Naive thymus-derived CD4-positive, alpha-beta T cell (primary cell): ENCODE measurements at regions of chr6 and their contacts with region 1.

Region 1: GRCh38 chr6:31834434-31835198 is 7.1 kb downstream of the HSPA1B start:
- DNase-seq: peak; percentile 77 to 84 (median 82)
- ATAC-seq: peak; percentile 82
- H3K4me3 ChIP-seq: peak overlapping the region; percentile 73
- H3K4me3 Mint-ChIP-seq: peak overlapping the region; percentile 84 to 99 (median 99)
- H3K27ac ChIP-seq: peak overlapping the region; percentile 92
- H3K27ac Mint-ChIP-seq: peak overlapping the region; percentile 91 to 100 (median 99)
- H3K4me1 ChIP-seq: peaks cover 40 to 48% of the 10 kb centered on the region in 2 donors
- H3K4me1 Mint-ChIP-seq: peaks cover 31 to 64% (median 53%) of the 10 kb centered on the region in 7 donors
- H3K27me3 ChIP-seq: no peaks in the 10 kb centered on the region
- H3K27me3 Mint-ChIP-seq: no peaks in the 10 kb centered on the region

Region 2: DNA sequence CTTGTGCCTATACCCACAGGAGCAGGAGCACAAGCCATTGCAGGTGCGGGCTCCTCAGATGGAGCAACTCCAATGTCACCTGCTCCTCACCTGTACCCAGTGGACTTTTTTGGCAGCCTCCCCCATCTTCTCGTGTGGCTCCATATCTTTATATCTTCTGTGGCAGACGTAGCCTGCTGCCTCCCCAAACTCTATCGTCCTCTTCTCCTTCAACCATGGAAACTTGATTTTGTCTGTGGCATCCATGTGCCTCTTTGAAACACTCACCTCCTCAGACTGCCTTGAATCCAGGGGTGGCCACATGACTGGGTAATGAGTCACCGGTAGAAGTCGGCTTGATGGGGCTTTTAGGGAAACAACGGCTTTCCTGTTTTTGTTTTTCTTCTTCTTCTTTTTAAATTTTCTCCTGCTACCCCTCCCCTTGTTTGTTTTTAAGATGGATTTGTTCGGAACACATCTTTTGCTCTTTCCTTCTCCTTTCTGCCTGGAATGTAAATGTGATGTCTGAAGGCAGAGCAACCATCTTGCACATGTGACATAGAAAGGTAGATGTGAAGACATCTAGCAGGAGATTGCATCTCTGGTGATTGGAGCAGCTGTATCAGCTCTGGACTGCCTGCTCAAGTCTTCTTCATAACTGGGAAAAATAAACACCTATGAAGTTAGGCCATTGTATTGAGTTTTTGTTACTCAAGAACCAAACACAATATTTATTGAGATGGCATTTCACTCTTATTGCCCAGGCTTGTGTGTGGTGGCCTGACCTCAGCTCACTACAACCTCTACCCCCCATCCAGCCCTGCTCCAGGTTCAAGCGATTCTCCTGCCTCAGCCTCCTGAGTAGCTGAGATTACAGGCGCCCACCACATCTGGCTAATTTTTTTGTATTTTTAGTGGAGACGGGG is 1020.2 kb before region 1 on chr6:
- CTCF ChIA-PET with region 1: no interaction called
- POLR2A ChIA-PET with region 1: no interaction called
- intact Hi-C with region 1: no loop called
- DNase-seq: peak in 2 of 9 donors; percentile 38 to 63
- ATAC-seq: peak; percentile 80
- H3K4me3 ChIP-seq: no peak overlapping the region
- H3K4me3 Mint-ChIP-seq: peak overlapping the region in 9 of 10 donors; percentile 12 to 70 (median 39)
- H3K27ac ChIP-seq: no peak overlapping the region
- H3K27ac Mint-ChIP-seq: peak overlapping the region; percentile 49 to 95 (median 83)
- H3K4me1 ChIP-seq: peaks cover 18 to 40% of the 10 kb centered on the region in 2 donors
- H3K4me1 Mint-ChIP-seq: peaks cover 39 to 85% (median 78%) of the 10 kb centered on the region in 7 donors
- H3K27me3 ChIP-seq: no peaks in the 10 kb centered on the region
- H3K27me3 Mint-ChIP-seq: no peaks in the 10 kb centered on the region

Region 3: DNA sequence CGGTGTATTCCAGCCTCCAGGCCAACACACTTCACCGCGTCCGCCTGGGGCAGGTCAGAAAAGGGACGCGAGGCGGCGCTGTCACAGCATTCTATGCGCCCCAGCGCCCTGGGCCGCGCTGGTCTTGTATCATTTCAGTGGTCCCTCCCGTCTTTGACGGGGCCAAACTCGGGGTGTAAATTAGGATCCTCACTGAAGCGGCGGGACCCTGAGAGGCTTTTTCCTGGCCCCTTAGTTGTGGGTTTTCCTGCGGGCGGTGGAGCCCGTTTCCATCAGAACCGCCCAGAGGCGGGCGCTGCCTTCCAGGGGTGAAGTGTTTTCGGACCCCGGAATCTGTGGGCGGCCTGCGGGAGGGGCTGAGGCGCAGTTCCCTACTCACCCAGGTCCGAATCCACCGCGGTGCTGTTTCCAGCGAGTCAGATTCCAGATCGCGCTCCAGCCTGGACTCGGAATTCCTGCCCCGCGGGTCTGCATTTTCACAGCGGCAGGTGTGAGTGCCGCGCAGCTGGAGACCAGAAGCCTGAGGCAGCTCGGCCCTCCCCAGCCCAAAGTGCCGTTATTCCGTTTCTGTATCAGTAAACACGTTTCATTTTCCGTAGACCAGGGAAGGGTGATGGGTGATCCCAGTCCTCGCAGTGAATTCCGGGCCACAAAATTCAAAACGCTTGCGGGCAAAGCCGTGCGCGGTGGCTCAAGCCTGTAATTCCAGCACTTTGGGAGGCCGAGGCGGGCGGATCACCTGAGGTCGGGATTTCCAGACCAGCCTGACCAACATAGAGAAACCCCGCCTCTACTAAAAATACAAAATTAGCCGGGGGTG is 340.5 kb before region 1 on chr6:
- CTCF ChIA-PET with region 1: no interaction called
- POLR2A ChIA-PET with region 1: no interaction called
- intact Hi-C with region 1: loop called (anchors 5 to 10 kb)
- DNase-seq: peak; percentile 33 to 78 (median 62)
- ATAC-seq: peak; percentile 65
- H3K4me3 ChIP-seq: peak overlapping the region; percentile 87
- H3K4me3 Mint-ChIP-seq: peak overlapping the region; percentile 78 to 93 (median 88)
- H3K27ac ChIP-seq: peak overlapping the region; percentile 81
- H3K27ac Mint-ChIP-seq: peak overlapping the region; percentile 36 to 98 (median 87)
- H3K4me1 ChIP-seq: peaks cover 17 to 24% of the 10 kb centered on the region in 2 donors
- H3K4me1 Mint-ChIP-seq: peaks cover 41 to 61% (median 50%) of the 10 kb centered on the region in 7 donors
- H3K27me3 ChIP-seq: no peaks in the 10 kb centered on the region
- H3K27me3 Mint-ChIP-seq: no peaks in the 10 kb centered on the region

Region 4: DNA sequence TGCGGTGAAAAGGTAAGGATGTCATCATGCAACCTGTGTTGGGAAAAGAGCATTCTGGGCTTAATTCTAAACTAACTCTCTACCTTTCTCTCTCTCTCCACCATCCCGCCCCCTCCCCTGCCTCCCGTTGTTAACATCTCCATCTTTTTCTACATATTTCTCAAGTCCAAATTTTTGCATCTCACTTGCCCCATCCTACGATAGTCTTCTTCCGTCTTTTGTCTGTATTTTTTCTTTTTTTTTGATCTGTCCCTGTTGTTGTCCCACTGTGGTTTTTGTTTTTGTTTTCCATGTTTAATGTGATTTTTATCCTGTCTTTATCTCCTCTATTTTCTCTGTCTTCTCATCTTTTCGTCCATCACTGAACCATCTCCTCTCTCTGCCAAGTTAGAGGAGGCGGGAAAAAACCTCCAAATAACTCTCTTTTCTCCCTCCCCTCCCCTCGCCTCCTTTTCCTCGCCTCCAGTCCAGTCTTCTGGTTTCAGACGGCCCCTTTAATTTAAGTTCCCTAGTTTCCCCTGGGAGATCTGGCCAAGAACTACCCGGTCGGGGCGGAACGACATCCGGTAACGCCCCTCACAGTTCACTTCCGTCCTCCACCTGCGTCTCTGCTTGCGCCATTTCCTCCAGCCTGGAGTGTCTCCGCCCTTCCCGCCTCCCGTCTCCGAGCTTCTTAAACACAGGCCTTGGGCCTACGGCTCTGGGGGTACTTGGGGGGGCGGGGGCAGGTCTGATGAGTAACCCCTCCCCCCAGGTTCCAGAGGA is 287.5 kb before region 1 on chr6 and contains the start of gene NFKBIL1:
- CTCF ChIA-PET with region 1: interaction called, 9 read pairs
- POLR2A ChIA-PET with region 1: interaction called, 8 read pairs
- intact Hi-C with region 1: loop called (anchors 1 kb)
- DNase-seq: peak; percentile 53 to 90 (median 84)
- ATAC-seq: peak; percentile 91
- H3K4me3 ChIP-seq: peak within 1 kb of the TSS; percentile 68
- H3K4me3 Mint-ChIP-seq: peak within 1 kb of the TSS; percentile 81 to 97 (median 91)
- H3K27ac ChIP-seq: peak within 1 kb of the TSS; percentile 89
- H3K27ac Mint-ChIP-seq: peak within 1 kb of the TSS; percentile 78 to 98 (median 95)
- H3K4me1 ChIP-seq: peaks cover 22 to 31% of the 10 kb centered on the region in 2 donors
- H3K4me1 Mint-ChIP-seq: peaks cover 22 to 57% (median 48%) of the 10 kb centered on the region in 7 donors
- H3K27me3 ChIP-seq: no peaks in the 10 kb centered on the region
- H3K27me3 Mint-ChIP-seq: no peaks in the 10 kb centered on the region
- total RNA-seq, gene NFKBIL1: 8.7 to 17.2 (median 11.6) TPM

Region 5: DNA sequence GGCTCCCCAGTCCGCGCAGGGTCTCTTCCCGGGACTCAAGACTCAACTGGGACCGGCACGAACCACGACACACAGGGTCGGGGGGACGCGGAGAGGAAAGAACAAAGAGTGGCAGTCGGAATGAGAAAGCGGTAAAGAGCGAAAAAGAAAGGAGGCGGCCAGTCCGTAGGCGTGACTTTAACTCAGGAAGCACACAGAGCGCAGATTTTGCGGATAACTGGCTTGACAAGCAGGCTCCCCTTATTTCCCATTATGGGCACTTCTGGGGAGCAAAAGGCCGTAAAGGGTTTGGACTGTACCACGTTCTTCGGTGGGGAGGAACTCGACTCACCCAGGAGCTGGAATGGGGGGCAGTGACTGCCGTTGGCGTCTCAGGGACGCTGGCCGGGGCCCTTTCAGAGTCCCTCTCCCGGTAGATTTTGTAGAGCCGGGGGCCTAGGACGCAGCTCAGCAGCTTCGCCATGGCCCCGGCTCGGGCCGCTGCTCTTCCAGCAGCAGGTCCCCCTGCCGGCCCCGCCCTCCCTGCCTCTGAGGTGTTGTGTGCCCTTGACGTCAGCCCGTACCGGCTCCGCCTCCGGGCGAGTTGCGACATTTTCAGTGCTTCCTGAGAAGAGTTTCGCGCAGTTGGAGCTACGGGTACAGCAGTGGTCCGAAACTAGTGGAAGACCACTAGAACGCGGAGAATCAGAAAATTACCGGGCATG is 131.6 kb before region 1 on chr6 and contains the start of gene ABHD16A:
- CTCF ChIA-PET with region 1: no interaction called
- POLR2A ChIA-PET with region 1: interaction called, 5 read pairs
- intact Hi-C with region 1: loop called (anchors 1 kb)
- DNase-seq: peak; percentile 93 to 97 (median 96)
- ATAC-seq: peak; percentile 95
- H3K4me3 ChIP-seq: peak within 1 kb of the TSS; percentile 98
- H3K4me3 Mint-ChIP-seq: peak within 1 kb of the TSS; percentile 92 to 100 (median 98)
- H3K27ac ChIP-seq: peak within 1 kb of the TSS; percentile 98
- H3K27ac Mint-ChIP-seq: peak within 1 kb of the TSS; percentile 95 to 98 (median 97)
- H3K4me1 ChIP-seq: peaks cover 21 to 28% of the 10 kb centered on the region in 2 donors
- H3K4me1 Mint-ChIP-seq: peaks cover 16 to 39% (median 31%) of the 10 kb centered on the region in 7 donors
- H3K27me3 ChIP-seq: no peaks in the 10 kb centered on the region
- H3K27me3 Mint-ChIP-seq: peaks cover 0 to 2% (median 0%) of the 10 kb centered on the region in 5 donors
- total RNA-seq, gene ABHD16A: 60.1 to 71.7 (median 65.2) TPM

Region 6: DNA sequence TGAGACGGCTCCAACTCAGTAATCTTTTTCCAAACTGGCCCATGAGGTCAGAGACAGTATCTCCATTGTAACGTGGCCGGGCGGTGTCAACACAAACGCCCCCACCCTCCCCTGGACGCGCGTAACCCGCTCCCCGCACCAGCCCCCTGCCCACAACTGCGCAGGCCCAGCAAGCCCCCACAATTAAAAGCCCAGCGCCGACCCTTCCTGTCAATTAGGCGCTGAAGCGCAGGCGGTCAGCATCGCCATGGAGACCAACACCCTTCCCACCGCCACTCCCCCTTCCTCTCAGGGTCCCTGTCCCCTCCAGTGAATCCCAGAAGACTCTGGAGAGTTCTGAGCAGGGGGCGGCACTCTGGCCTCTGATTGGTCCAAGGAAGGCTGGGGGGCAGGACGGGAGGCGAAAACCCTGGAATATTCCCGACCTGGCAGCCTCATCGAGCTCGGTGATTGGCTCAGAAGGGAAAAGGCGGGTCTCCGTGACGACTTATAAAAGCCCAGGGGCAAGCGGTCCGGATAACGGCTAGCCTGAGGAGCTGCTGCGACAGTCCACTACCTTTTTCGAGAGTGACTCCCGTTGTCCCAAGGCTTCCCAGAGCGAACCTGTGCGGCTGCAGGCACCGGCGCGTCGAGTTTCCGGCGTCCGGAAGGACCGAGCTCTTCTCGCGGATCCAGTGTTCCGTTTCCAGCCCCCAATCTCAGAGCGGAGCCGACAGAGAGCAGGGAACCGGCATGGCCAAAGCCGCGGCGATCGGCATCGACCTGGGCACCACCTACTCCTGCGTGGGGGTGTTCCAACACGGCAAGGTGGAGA is 19.4 kb before region 1 on chr6 and contains the starts of genes HSPA1A and HSPA1L:
- CTCF ChIA-PET with region 1: interaction called, 4 read pairs
- POLR2A ChIA-PET with region 1: interaction called, 10 read pairs
- intact Hi-C with region 1: loop called (anchors 2 kb)
- DNase-seq: peak in 6 of 9 donors; percentile 32 to 81 (median 42)
- ATAC-seq: peak; percentile 43
- H3K4me3 ChIP-seq: peak within 1 kb of the TSS; percentile 68
- H3K4me3 Mint-ChIP-seq: peak within 1 kb of the TSS; percentile 85 to 96 (median 94)
- H3K27ac ChIP-seq: peak within 1 kb of the TSS; percentile 78
- H3K27ac Mint-ChIP-seq: peak within 1 kb of the TSS; percentile 86 to 93 (median 90)
- H3K4me1 ChIP-seq: peaks cover 21 to 30% of the 10 kb centered on the region in 2 donors
- H3K4me1 Mint-ChIP-seq: peaks cover 7 to 44% (median 39%) of the 10 kb centered on the region in 7 donors
- H3K27me3 ChIP-seq: no peaks in the 10 kb centered on the region
- H3K27me3 Mint-ChIP-seq: no peaks in the 10 kb centered on the region
- total RNA-seq, gene HSPA1A: 6.7 to 125 (median 30.3) TPM
- total RNA-seq, gene HSPA1L: 3.3 to 5.5 (median 4.7) TPM

Region 7: DNA sequence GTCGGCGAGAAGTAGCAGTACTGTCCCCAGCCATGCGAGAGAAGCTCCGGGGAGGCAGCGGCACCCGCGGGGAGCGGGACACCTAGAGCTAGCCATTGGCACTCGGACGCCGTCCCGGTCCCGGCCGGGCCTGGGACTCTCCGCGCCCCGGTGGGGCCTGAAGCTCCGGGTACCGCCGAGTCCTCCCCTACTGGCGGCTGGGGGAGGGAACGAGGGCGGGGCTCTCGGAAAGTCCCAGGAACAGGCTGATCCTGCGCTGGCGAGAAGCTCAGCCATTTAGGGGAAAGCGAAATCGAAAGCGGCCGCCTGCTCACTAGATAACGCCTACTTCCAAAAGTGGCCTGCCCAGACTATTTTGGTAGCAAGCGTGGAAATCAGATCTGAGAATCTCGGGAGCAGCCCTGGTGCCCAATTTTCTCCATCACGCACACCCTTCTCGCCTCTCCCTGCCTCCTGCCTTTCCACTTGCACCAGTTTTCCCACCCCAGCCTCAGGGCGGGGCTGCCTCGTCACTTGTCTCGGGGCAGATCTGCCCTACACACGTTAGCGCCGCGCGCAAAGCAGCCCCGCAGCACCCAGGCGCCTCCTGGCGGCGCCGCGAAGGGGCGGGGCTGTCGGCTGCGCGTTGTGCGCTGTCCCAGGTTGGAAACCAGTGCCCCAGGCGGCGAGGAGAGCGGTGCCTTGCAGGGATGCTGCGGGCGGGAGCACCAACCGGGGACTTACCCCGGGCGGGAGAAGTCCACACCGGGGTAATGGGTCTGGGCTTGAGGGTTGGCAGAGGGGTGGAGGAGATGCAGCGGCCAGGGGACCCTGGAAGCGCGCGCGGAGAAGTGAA is 1019.1 kb after region 1 on chr6 and contains the starts of genes PSMB9 and TAP1:
- CTCF ChIA-PET with region 1: no interaction called
- POLR2A ChIA-PET with region 1: no interaction called
- intact Hi-C with region 1: loop called in 1 of 2 experiments (anchors 10 kb)
- DNase-seq: peak; percentile 92 to 97 (median 94)
- ATAC-seq: peak; percentile 92
- H3K4me3 ChIP-seq: peak within 1 kb of the TSS; percentile 91
- H3K4me3 Mint-ChIP-seq: peak within 1 kb of the TSS; percentile 96 to 100 (median 100)
- H3K27ac ChIP-seq: peak within 1 kb of the TSS; percentile 100
- H3K27ac Mint-ChIP-seq: peak within 1 kb of the TSS; percentile 97 to 100 (median 100)
- H3K4me1 ChIP-seq: peaks cover 45 to 57% of the 10 kb centered on the region in 2 donors
- H3K4me1 Mint-ChIP-seq: peaks cover 61 to 80% (median 72%) of the 10 kb centered on the region in 7 donors
- H3K27me3 ChIP-seq: no peaks in the 10 kb centered on the region
- H3K27me3 Mint-ChIP-seq: no peaks in the 10 kb centered on the region
- total RNA-seq, gene PSMB9: 70.3 to 452 (median 90.5) TPM
- total RNA-seq, gene TAP1: 92.1 to 500 (median 103) TPM